PC-3 (cell line): ENCODE measurements at regions of chrX and their contacts with region 1.

Region 1: GRCh38 chrX:144738243-144738642 is 509.1 kb upstream of the SPANXN1 start:
- DNase-seq: no peak
- ATAC-seq: no peak
- H3K4me3 ChIP-seq: no peak overlapping the region
- H3K27ac ChIP-seq: no peak overlapping the region
- H3K4me1 ChIP-seq: no peaks in the 10 kb centered on the region
- H3K27me3 ChIP-seq: no peaks in the 10 kb centered on the region
- CTCF ChIP-seq: no peak

Region 2: GRCh38 chrX:145178268-145178667 is 440.0 kb after region 1 on chrX:
- CTCF ChIA-PET with region 1: interaction called, 11 read pairs
- POLR2A ChIA-PET with region 1: no interaction called
- intact Hi-C with region 1: no loop called
- DNase-seq: peak; percentile 33
- ATAC-seq: no peak
- H3K4me3 ChIP-seq: no peak overlapping the region
- H3K27ac ChIP-seq: no peak overlapping the region
- H3K4me1 ChIP-seq: no peaks in the 10 kb centered on the region
- H3K27me3 ChIP-seq: no peaks in the 10 kb centered on the region
- CTCF ChIP-seq: peak; percentile 51